Ascending aorta (tissue), 2 donors: ENCODE measurements at regions of chr14 and their contacts with region 1.

Region 1: DNA sequence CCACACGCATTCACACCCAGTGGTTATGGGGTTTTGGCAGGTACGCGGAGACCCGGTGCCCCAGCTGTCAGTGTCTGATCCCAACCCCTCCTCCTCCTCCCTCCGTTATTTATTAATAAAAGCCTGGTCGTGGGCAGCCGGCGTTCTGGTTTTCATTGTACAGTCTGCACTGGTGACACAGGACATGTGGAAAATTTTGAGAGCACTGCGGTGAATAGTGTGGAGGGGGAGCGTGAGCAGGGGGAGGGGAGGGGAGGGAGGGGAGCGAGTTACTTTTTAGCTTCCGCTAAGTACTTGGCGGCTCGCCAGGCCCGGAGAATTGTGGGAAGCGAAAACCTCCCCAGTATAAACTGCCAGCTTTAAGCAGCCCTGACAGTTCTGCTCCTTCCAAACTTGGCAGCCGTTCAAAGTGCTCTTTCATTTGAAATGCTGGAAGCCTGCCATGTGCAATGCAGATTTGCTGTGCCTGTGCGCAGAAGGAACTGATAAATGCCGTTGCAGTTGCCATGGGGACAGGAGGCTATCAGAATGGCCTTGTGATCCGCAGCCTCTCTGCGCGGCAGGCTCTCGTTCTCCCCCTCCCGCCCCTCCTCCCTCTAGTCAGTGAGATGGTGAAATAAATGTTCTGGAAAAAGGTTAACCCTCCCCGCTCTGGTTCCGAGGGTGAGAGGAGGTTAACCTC is 11.7 kb upstream of the IRF2BPL start:
- DNase-seq: peak; percentile 90 to 98
- H3K4me3 ChIP-seq: peak overlapping the region; percentile 1 to 59
- H3K27ac ChIP-seq: peak overlapping the region; percentile 78 to 88
- H3K4me1 ChIP-seq: peaks cover 26 to 71% of the 10 kb centered on the region in 2 donors
- H3K27me3 ChIP-seq: no peaks in the 10 kb centered on the region
- CTCF ChIP-seq: no peak

Region 2: GRCh38 chr14:76701981-76702380 is 338.2 kb before region 1 on chr14:
- intact Hi-C with region 1: loop called (anchors 5 kb)
- DNase-seq: peak; percentile 82 to 96
- H3K4me3 ChIP-seq: no peak overlapping the region
- H3K27ac ChIP-seq: peak overlapping the region; percentile 61 to 85
- H3K4me1 ChIP-seq: peaks cover 20 to 38% of the 10 kb centered on the region in 2 donors
- H3K27me3 ChIP-seq: no peaks in the 10 kb centered on the region
- CTCF ChIP-seq: no peak

Region 3: GRCh38 chr14:76863724-76864407 is 176.3 kb before region 1 on chr14:
- intact Hi-C with region 1: no loop called
- DNase-seq: peak in 1 of 2 donors; percentile 27
- H3K4me3 ChIP-seq: no peak overlapping the region
- H3K27ac ChIP-seq: peak overlapping the region in 1 of 2 donors; percentile 9
- H3K4me1 ChIP-seq: no peaks in the 10 kb centered on the region
- H3K27me3 ChIP-seq: no peaks in the 10 kb centered on the region
- CTCF ChIP-seq: no peak

Region 4: GRCh38 chr14:76956316-76957090 is 83.7 kb before region 1 on chr14:
- intact Hi-C with region 1: loop called (anchors 5 kb)
- DNase-seq: peak; percentile 82 to 97
- H3K4me3 ChIP-seq: peak overlapping the region; percentile 45 to 59
- H3K27ac ChIP-seq: peak overlapping the region; percentile 94 to 97
- H3K4me1 ChIP-seq: peaks cover 12 to 56% of the 10 kb centered on the region in 2 donors
- H3K27me3 ChIP-seq: no peaks in the 10 kb centered on the region
- CTCF ChIP-seq: no peak